GM12878 (cell line): ENCODE measurements at regions of chr1 and their contacts with region 1.

Region 1: DNA sequence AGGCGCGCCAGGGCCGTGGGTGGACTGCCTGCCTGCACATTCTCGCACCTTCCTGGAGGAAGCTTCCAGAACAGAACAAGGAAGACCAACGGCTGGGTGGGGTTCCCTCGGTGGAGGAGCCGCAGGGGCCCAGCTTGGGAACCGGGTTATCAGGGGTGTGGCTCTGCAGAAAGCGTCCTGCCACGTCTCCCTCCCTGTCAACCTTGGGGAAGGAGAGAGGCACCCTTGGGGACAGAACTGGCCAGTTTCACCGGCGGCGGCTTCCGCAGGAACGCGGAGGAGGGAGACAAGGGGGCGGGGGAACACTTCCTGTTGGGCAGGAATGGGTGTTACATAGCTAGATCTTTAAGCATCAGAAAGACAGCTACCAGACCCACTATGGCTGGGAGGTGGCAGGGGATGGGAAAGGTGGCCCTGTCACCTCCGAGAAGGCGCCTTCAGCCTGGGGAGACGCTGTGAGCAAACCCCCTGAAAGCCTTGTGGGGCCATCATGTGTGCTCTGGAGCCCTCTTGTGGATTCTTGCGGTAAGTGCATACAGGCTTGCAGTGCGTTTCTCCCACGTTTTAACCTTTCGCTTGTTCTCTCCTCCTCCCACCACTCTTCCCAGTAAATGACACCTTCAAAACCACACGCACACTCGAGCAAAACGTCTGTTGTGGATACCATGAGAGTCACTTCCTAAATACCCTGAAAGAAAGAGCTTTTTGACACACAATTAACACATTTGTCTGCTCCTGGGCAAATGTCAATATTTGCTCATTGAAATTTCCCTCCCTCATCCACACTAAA is 3.8 kb upstream of the PLEKHA6 start:
- DNase-seq: peak; percentile 52
- ATAC-seq: peak; percentile 80
- H3K4me3 ChIP-seq: peak overlapping the region; percentile 49
- H3K27ac ChIP-seq: no peak overlapping the region
- H3K4me1 ChIP-seq: peaks cover 11% of the 10 kb centered on the region
- H3K27me3 ChIP-seq: no peaks in the 10 kb centered on the region
- CTCF ChIP-seq: peak; percentile 93 to 97 (median 97); a peak in 5 of 6 replicates
- EP300 ChIP-seq: no peak
- POLR2A ChIP-seq: no peak
- RAD21 ChIP-seq: peak; percentile 88

Region 2: DNA sequence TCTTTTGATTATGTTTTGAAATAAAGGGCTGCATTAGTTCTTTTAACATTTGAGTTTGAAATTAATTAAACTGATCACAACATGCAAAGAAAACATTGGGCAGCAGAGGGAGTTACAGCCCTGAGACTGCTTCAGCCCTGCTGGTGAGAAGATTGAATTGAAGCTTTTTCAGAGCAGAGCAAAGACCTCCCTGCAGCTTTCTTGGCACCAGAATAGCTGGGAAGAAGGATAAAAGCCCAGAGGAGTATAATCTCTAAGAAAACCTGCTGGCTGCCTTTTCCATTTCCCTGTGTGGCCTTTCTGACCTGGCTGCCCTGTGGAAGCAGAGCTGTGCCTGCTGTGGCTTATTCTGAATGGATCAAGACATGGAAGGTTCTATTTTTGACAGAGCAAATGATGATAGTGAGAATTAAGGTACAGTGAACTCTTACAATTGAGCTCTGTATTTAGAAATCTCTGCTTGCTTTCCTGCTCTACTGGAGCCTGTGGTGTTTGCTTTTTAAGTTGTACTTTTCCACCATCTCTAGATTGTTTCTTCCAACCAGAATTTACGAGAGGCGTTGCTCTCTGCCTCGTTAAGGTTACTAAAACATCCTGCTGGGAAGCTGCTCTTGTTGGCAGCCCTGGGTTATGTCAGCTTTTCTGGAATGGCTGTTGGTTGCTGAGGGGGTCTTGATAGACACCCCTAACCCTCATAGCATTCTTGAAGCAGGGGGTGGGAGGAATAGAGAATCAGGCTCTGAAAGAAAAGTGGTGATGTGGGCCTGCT is 492.2 kb before region 1 on chr1:
- CTCF ChIA-PET with region 1: interaction called, 10 read pairs
- POLR2A ChIA-PET with region 1: no interaction called
- RAD21 ChIA-PET with region 1: interaction called, 3 read pairs
- SMC1A ChIA-PET with region 1: interaction called, 3 read pairs
- in situ Hi-C with region 1: loop called (anchors 10 kb)
- intact Hi-C with region 1: no loop called
- DNase-seq: no peak
- ATAC-seq: peak; percentile 88
- H3K4me3 ChIP-seq: no peak overlapping the region
- H3K27ac ChIP-seq: no peak overlapping the region
- H3K4me1 ChIP-seq: no peaks in the 10 kb centered on the region
- H3K27me3 ChIP-seq: no peaks in the 10 kb centered on the region
- CTCF ChIP-seq: peak; percentile 64 to 67 (median 67)
- EP300 ChIP-seq: no peak
- POLR2A ChIP-seq: no peak
- RAD21 ChIP-seq: peak; percentile 56

Region 3: DNA sequence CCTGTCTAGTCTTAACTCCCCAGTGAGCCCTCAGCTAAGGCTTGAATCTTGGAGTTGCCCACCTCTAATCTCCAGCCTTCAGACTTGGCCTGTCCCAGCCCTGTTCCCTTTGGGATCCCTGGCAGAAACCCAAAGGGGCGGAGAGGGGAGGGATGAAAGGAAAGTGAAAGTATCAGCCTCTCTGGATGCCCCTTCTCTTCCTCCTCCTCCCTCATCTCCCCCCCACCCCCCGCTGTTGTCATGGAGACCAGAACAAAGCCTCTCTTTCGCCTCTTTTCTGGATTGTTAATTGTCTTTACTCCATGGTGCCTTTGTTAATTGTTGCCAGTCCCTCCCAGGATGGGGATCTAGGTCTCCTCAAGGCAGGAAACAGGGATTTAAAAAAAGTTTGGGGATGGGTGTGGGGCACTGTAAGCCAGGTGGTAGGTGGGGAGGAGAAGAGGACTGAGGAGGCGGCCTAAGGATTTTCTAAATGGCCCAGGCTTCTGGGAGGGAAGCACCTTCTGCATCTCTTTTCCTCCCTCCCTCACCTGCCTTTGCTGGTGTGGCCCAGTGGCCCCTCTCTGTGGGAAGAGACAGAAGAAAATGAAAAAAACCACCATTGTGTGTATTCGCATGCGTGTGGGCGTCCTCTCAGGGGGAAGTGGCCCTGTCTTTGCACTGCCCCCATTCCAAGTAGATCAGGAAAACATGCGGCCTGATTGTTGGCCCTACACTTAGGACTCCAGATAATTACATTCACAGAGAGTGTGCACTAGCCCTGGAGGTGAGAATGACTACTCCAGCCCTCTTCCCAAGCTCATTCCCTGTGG is 298.1 kb before region 1 on chr1:
- CTCF ChIA-PET with region 1: no interaction called
- POLR2A ChIA-PET with region 1: no interaction called
- RAD21 ChIA-PET with region 1: no interaction called
- SMC1A ChIA-PET with region 1: no interaction called
- in situ Hi-C with region 1: no loop called
- intact Hi-C with region 1: no loop called
- DNase-seq: no peak
- ATAC-seq: no peak
- H3K4me3 ChIP-seq: no peak overlapping the region
- H3K27ac ChIP-seq: no peak overlapping the region
- H3K4me1 ChIP-seq: no peaks in the 10 kb centered on the region
- H3K27me3 ChIP-seq: peaks cover 0 to 1% of the 10 kb centered on the region in 2 experiments; a peak in 3 of 4 replicates
- CTCF ChIP-seq: no peak
- EP300 ChIP-seq: no peak
- POLR2A ChIP-seq: no peak
- RAD21 ChIP-seq: no peak

Region 4: DNA sequence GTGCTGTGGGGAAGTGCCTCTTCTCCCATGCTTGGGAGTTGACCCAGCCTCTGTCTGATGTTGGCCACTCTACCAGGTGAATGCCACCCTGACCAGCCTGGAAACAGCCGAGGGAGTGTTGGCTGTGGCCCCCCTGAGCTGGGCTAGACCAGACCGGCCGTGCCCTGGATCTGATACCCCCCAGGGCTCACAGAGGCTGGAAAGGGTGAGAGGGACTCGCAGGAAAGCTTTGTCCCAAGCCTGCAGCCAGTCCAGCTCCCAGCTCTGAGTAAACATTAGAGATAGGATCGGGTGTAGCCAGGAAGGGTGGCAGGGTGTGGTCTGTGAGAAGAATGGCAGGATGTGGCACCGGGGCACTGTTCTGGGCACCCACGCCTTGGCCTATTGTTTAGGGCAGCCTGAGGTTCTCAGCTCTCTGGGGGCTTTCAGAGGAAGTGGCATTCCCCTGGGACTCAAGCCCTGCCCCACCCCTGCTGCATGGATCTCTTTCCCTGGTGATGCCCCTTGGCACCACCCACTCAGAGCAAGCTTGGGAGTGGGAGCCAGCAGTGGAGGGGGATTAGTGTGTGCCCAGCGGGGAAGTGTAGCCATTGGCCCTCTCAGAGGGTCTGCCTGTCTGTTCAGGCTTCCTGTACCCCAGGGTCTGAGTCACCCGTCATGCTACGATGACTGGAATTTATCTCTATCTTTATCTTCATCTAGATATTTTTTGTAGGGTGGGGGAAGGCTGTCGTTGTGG is 259.2 kb before region 1 on chr1:
- CTCF ChIA-PET with region 1: no interaction called
- POLR2A ChIA-PET with region 1: no interaction called
- RAD21 ChIA-PET with region 1: no interaction called
- SMC1A ChIA-PET with region 1: no interaction called
- in situ Hi-C with region 1: no loop called
- intact Hi-C with region 1: no loop called
- DNase-seq: no peak
- ATAC-seq: peak; percentile 63
- H3K4me3 ChIP-seq: no peak overlapping the region
- H3K27ac ChIP-seq: no peak overlapping the region
- H3K4me1 ChIP-seq: peaks cover 3% of the 10 kb centered on the region; the same call in 1 of the 2 replicates
- H3K27me3 ChIP-seq: no peaks in the 10 kb centered on the region
- CTCF ChIP-seq: no peak
- EP300 ChIP-seq: no peak
- POLR2A ChIP-seq: no peak
- RAD21 ChIP-seq: no peak

Region 5: DNA sequence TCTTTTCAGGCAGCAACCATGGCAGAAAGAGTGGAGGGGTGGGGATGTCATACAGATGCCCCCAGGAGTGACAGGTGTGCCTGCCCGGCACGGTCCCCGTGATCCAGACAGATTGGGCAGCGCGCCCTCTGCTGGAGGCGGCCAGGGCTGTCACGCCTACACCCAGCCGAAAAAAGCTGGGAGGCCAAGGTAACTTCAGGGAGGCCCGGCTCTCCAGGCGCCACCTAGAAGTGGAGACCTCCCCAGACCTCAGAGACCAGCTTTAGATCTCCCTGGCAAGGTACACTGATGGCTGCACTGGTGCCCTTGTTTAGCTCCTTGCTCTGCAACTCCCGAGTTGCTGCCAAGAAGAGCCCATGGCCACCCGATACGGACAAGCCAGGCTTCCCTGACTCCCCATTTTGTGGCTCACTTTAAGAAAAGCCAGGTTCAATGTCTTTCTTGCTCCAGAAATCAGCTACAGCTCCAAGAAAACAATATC is 156.4 kb before region 1 on chr1:
- CTCF ChIA-PET with region 1: interaction called, 53 read pairs
- POLR2A ChIA-PET with region 1: no interaction called
- RAD21 ChIA-PET with region 1: interaction called, 6 read pairs
- SMC1A ChIA-PET with region 1: interaction called, 8 read pairs
- in situ Hi-C with region 1: no loop called
- intact Hi-C with region 1: loop called (anchors 5 kb)
- DNase-seq: no peak
- ATAC-seq: peak; percentile 98
- H3K4me3 ChIP-seq: no peak overlapping the region
- H3K27ac ChIP-seq: no peak overlapping the region
- H3K4me1 ChIP-seq: no peaks in the 10 kb centered on the region
- H3K27me3 ChIP-seq: peaks cover 0 to 8% of the 10 kb centered on the region in 2 experiments; a peak in 2 of 4 replicates
- CTCF ChIP-seq: peak; percentile 79 to 94 (median 90)
- EP300 ChIP-seq: no peak
- POLR2A ChIP-seq: no peak
- RAD21 ChIP-seq: peak; percentile 52

Region 6: GRCh38 chr1:204263254-204263910 is 100.1 kb before region 1 on chr1:
- CTCF ChIA-PET with region 1: interaction called, 153 read pairs
- POLR2A ChIA-PET with region 1: no interaction called
- RAD21 ChIA-PET with region 1: interaction called, 57 read pairs
- SMC1A ChIA-PET with region 1: interaction called, 86 read pairs
- in situ Hi-C with region 1: no loop called
- intact Hi-C with region 1: loop called (anchors 1 kb)
- DNase-seq: no peak
- ATAC-seq: no peak
- H3K4me3 ChIP-seq: no peak overlapping the region
- H3K27ac ChIP-seq: no peak overlapping the region
- H3K4me1 ChIP-seq: no peaks in the 10 kb centered on the region
- H3K27me3 ChIP-seq: peaks cover 2 to 8% of the 10 kb centered on the region in 2 experiments; a peak in 3 of 4 replicates
- CTCF ChIP-seq: no peak
- EP300 ChIP-seq: no peak
- POLR2A ChIP-seq: no peak
- RAD21 ChIP-seq: no peak

Region 7: DNA sequence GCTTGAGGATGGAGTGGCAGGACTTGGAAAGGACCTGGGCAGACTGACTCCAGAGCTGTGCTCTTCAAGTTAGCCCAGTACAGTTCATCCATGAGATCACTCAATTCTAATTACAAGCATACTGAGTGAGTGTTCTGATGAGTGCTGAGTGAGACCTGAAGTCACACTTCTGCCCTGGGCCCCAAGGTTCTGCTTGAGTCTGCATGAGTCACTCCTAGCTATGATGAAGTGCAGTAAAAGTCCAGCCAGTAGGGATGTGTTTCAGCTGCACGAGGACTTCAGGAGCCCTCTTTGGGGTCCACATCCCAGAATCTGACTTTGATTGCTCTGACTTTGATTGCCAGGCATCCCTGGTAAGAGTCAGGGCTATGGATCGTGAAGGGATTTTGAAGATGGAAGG is 39.6 kb before region 1 on chr1:
- CTCF ChIA-PET with region 1: interaction called, 14 read pairs
- POLR2A ChIA-PET with region 1: no interaction called
- RAD21 ChIA-PET with region 1: no interaction called
- SMC1A ChIA-PET with region 1: interaction called, 4 read pairs
- in situ Hi-C with region 1: no loop called
- intact Hi-C with region 1: no loop called
- DNase-seq: no peak
- ATAC-seq: peak; percentile 63
- H3K4me3 ChIP-seq: no peak overlapping the region
- H3K27ac ChIP-seq: no peak overlapping the region
- H3K4me1 ChIP-seq: no peaks in the 10 kb centered on the region
- H3K27me3 ChIP-seq: peaks cover 0 to 3% of the 10 kb centered on the region in 2 experiments; a peak in 2 of 4 replicates
- CTCF ChIP-seq: no peak
- EP300 ChIP-seq: no peak
- POLR2A ChIP-seq: no peak
- RAD21 ChIP-seq: no peak

Region 8: GRCh38 chr1:204377795-204378608 is 14.5 kb after region 1 on chr1:
- CTCF ChIA-PET with region 1: interaction called, 109 read pairs
- POLR2A ChIA-PET with region 1: interaction called, 3 read pairs
- RAD21 ChIA-PET with region 1: interaction called, 13 read pairs
- SMC1A ChIA-PET with region 1: interaction called, 29 read pairs
- in situ Hi-C with region 1: no loop called
- intact Hi-C with region 1: no loop called
- DNase-seq: no peak
- ATAC-seq: peak; percentile 89
- H3K4me3 ChIP-seq: peak overlapping the region; percentile 57; the same call in 1 of the 2 replicates
- H3K27ac ChIP-seq: no peak overlapping the region
- H3K4me1 ChIP-seq: peaks cover 6% of the 10 kb centered on the region
- H3K27me3 ChIP-seq: peaks cover 4 to 5% of the 10 kb centered on the region in 2 experiments; a peak in 3 of 4 replicates
- CTCF ChIP-seq: no peak
- EP300 ChIP-seq: peak in 1 of 2 experiments; percentile 73; a peak in 2 of 4 replicates
- POLR2A ChIP-seq: no peak
- RAD21 ChIP-seq: no peak

Region 9: GRCh38 chr1:205284343-205285144 is 921.0 kb after region 1 on chr1:
- CTCF ChIA-PET with region 1: no interaction called
- POLR2A ChIA-PET with region 1: no interaction called
- RAD21 ChIA-PET with region 1: no interaction called
- SMC1A ChIA-PET with region 1: no interaction called
- in situ Hi-C with region 1: no loop called
- intact Hi-C with region 1: no loop called
- DNase-seq: no peak
- ATAC-seq: peak; percentile 61
- H3K4me3 ChIP-seq: 0 out of 2 replicates have a peak overlapping the region, but pooled peaks have one; percentile 32
- H3K27ac ChIP-seq: no peak overlapping the region
- H3K4me1 ChIP-seq: peaks cover 64% of the 10 kb centered on the region
- H3K27me3 ChIP-seq: no peaks in the 10 kb centered on the region; a peak in 1 of 4 replicates
- CTCF ChIP-seq: 0 out of 6 replicates have a peak, but pooled peaks of 1 of the 3 experiments have one; percentile 0
- EP300 ChIP-seq: peak; percentile 33 to 42; a peak in 1 of 4 replicates
- POLR2A ChIP-seq: 0 out of 2 replicates have a peak, but pooled peaks have one; percentile 29
- RAD21 ChIP-seq: no peak